Mucosa of descending colon (tissue), 3 donors: ENCODE measurements at regions of chr1 and their contacts with region 1.

Region 1: GRCh38 chr1:15283526-15283925 is 36.5 kb downstream of the FHAD1 start:
- DNase-seq: no peak
- ATAC-seq: no peak
- H3K4me3 ChIP-seq: no peak overlapping the region
- H3K4me1 ChIP-seq: peaks cover 23% of the 10 kb centered on the region
- CTCF ChIP-seq: no peak

Region 2: GRCh38 chr1:15056515-15057285 is 226.8 kb before region 1 on chr1:
- intact Hi-C with region 1: no loop called
- DNase-seq: no peak
- ATAC-seq: no peak
- H3K4me3 ChIP-seq: no peak overlapping the region
- H3K4me1 ChIP-seq: no peaks in the 10 kb centered on the region
- CTCF ChIP-seq: no peak

Region 3: DNA sequence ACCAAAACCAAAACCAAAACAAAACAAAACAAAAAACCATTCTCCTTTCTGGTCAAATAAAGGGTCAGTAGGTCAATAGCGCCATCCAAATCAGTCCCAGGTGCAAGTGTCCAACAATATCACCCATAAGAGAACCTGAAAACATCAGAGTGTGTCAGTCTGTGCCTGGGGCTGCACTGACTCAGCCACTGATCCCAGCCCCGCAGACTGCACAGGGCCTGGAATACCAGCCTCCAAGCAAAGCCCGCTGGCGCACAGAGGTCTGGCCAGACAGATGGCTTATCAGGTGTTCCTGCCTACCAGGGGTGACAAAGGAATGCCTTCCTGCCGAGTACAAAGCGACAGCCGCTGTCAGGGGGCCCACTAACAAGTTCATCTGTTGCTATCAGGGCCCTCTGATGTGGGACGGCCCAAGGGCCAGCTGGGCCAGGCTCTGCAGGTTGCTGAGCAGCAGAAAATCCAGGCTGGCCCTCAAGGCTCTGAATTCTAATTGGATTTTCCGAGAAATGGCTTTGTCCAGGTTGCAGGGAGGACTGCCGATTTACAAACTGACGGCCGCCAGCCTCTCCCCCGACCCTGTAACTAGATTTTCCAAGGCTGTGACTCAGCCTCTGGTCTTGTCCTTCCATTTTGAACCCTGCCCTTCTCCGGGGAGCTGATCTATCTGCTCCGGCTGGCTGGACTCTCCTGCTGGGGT is 143.7 kb before region 1 on chr1:
- intact Hi-C with region 1: loop called in 1 of 2 experiments (anchors 10 kb)
- DNase-seq: no peak
- ATAC-seq: no peak
- H3K4me3 ChIP-seq: no peak overlapping the region
- H3K4me1 ChIP-seq: no peaks in the 10 kb centered on the region
- CTCF ChIP-seq: no peak

Region 4: DNA sequence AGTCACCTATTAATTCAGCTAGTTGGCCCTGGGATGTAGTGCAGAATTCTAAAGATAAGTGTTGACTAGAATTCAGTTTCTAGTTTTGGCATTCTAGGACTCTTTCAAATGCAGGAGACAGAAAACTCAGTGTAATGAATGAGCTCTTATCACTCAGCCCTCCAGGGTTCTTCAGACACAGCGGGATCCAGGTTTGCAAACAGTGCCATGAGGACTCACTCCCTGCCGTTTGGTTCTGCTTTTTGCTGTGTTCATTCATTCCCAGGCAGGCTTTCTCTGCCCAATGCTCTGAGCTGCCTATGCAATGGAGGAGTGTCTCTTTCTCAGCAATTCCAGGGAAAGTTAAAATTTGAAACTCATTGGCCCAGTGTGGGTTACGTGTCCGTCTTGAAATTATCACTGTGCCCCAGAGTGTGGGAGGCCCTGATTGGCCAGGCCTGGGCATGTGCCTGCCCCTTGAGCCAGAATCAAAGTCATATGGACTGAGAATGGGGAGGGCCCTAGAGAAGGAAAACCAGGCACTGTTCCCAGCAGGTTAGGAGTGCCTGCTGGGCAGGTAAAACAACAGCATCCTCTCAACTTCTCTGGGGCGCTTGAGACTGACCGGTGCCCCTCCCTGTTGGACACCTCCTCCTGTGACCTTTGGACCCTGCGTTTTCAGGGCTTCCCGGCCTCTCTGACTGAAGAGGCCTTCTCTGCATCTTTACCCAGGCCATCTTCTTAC is 86.6 kb before region 1 on chr1:
- intact Hi-C with region 1: no loop called
- DNase-seq: peak; percentile 75 to 81 (median 76)
- ATAC-seq: peak; percentile 80
- H3K4me3 ChIP-seq: no peak overlapping the region
- H3K4me1 ChIP-seq: peaks cover 40% of the 10 kb centered on the region
- CTCF ChIP-seq: no peak